Activated CD4-positive, alpha-beta T cell treated with anti-CD3 and anti-CD28 coated beads, Interleukin-2, amount 10 ng/mL, durations not matched to agents 7 days and 5 days (primary cell): ENCODE measurements at regions of chr14 and their contacts with region 1.

Region 1: DNA sequence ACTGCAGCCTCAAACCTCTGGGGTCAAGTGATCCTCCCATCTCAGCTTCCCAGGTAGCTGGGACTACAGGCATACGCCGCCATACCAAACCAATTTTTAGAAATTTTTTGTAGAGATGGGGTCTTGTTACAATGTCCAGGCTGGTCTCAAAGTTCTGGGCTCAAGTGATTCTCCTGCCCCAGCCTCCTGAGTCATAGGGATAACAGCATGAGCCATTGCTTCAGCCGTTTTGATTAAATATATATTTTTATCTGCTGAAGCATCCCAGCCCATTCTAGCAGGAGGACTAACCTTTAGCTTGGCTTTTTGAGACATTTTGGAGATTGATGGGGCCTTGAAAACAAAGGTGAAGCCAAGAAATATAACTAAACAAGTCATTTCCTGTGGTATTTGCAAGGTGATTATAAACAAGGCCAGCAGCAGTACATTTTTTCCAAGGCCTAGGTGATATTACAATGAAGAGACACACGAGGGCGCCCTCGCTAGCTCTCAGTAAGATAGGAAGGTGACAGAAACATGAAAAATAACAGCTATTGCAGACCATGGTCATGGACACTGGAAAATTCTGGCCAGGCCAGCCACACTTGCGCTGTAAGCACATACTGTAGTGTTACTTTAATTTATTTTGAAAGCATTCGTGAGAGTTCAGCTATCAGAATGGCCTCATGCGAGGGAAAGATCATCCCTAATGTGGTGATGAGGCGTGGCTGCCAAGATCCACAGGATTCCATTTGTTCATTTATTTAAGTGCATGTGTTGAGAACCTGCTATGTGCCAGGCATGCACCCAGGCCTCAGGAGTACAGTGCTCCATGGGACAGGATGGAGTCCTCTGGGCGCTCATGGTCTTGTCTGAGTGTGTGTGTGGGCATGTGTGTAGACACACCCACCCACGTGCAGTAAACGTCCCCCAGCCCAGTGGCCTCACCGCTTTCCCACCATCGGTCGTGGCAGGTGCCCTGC is 63.5 kb downstream of the DGLUCY start:
- DNase-seq: peak; percentile 74
- H3K4me3 Mint-ChIP-seq: no peak overlapping the region
- H3K27ac Mint-ChIP-seq: peak overlapping the region; percentile 84
- H3K4me1 Mint-ChIP-seq: peaks cover 24% of the 10 kb centered on the region
- H3K27me3 Mint-ChIP-seq: no peaks in the 10 kb centered on the region

Region 2: GRCh38 chr14:91088585-91089235 is 88.6 kb before region 1 on chr14:
- CTCF ChIA-PET with region 1: no interaction called
- POLR2A ChIA-PET with region 1: no interaction called
- DNase-seq: no peak
- H3K4me3 Mint-ChIP-seq: no peak overlapping the region
- H3K27ac Mint-ChIP-seq: peak overlapping the region; percentile 41
- H3K4me1 Mint-ChIP-seq: peaks cover 27% of the 10 kb centered on the region
- H3K27me3 Mint-ChIP-seq: no peaks in the 10 kb centered on the region

Region 3: DNA sequence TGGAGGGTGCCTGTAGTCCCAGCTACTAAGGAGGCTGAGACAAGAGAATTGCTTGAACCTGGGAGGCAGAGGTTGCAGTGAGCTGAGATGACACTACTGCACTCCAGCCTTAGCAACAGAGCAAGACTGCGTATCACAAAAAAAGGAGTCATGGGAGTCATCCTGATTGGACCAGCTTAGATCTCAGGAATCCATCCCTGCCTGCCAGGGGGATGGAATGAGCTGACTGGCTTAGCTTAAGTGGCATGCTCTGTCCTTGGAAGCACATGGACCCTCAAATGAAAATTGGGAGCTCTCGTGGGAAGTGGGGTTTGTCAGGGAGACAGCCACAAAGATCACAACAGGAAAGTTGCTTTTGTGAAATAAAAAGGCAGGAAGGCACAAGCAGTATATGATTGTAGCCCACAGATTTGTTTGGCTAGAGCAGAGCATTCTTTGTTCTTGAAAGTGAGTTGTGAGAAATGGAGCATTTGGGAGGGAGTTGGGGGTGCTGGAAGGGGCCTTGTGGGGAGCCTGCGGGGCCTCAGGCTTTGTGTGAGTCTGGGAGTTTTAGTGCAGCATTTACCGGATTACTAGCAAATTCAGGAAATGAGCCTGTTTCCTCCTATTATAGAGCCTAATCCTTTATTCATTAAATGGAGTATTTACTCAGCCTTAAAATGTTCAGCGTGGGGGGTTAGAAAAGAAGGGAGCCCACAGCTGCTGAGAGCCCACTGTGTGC is 32.8 kb before region 1 on chr14:
- CTCF ChIA-PET with region 1: interaction called, 11 read pairs
- POLR2A ChIA-PET with region 1: no interaction called
- DNase-seq: no peak
- H3K4me3 Mint-ChIP-seq: no peak overlapping the region
- H3K27ac Mint-ChIP-seq: peak overlapping the region; percentile 66
- H3K4me1 Mint-ChIP-seq: peaks cover 64% of the 10 kb centered on the region
- H3K27me3 Mint-ChIP-seq: no peaks in the 10 kb centered on the region

Region 4: DNA sequence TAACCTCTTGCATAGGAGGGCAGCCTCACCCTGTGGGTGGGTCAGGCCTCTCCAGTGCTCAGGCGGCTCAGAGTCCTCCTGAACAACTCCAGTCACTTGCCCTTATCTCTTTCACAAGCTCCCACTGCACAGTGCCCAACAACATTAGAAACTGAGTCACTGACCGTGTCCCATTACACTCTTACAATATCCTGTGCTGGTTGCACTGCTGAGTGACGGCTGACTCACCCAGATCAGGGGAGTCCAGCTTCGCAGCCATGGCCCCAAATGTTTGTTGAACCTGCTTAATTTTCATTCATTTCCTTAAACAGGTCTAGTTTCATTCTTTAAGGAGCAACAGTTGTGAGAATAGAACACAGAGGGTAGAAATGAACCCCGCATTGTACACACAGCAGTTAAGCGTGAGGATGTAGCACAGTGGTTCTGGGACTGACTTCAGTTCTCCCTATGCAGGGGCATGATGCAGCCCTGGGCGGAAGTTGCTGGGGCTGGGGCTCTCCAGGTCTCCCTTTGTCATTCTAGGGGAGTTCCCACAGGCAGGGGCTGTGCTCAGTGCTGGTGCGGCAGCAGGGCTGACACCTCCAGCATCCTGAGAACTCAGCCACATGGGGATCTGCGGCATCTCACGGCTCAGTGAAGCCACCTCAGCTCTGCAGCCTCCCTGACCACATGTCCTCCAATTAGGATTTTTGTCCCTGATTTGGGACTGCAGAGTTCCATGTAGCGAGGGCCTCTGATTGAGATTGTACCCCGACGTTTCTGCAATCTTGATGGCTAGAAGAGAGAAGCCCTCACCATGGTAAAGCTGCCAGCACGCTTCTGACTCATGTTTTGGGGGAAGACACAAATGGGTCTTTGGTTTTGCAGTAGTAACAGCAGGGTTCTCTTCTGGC is 51.0 kb after region 1 on chr14:
- CTCF ChIA-PET with region 1: interaction called, 17 read pairs
- POLR2A ChIA-PET with region 1: no interaction called
- DNase-seq: peak; percentile 84
- H3K4me3 Mint-ChIP-seq: peak overlapping the region; percentile 64
- H3K27ac Mint-ChIP-seq: peak overlapping the region; percentile 99
- H3K4me1 Mint-ChIP-seq: peaks cover 90% of the 10 kb centered on the region
- H3K27me3 Mint-ChIP-seq: no peaks in the 10 kb centered on the region

Region 5: DNA sequence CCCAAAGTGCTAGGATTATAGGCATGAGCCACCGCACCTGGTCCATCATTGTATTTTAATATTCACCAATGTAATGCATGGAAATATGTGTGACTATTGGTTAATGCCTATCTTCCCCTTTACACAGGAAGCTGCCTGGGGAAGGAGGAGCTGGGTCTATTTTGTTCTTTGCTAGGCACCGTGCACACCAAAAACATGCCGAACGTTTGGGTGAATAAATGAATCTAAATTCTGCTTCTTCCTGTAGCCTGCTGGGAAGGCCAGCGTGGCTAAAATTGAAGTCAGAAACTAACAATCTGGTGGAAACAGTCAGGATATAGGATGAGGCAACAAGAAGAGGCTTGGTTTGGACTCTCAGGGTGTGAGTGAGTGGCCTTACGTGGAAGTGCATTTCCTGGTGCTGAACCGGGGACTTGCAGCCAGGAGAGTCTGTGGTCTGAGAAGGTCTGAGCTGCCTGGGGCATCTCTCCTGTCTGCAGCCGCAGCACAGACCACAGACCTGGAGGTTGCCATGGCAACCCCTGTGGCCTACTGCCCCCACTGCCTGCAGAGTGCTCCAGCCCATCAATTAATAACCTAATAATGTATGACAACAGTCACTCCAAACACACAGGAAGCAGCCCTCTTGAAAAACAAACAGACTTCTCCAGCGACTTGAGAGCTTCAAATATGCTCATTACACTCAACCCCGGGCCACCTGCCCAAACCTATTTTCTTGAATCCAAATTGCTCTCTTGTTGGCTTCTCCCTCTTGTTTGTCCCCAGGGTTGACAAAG is 72.7 kb after region 1 on chr14:
- CTCF ChIA-PET with region 1: interaction called, 20 read pairs
- POLR2A ChIA-PET with region 1: no interaction called
- DNase-seq: peak; percentile 63
- H3K4me3 Mint-ChIP-seq: peak overlapping the region; percentile 39
- H3K27ac Mint-ChIP-seq: peak overlapping the region; percentile 96
- H3K4me1 Mint-ChIP-seq: peaks cover 86% of the 10 kb centered on the region
- H3K27me3 Mint-ChIP-seq: no peaks in the 10 kb centered on the region

Region 6: DNA sequence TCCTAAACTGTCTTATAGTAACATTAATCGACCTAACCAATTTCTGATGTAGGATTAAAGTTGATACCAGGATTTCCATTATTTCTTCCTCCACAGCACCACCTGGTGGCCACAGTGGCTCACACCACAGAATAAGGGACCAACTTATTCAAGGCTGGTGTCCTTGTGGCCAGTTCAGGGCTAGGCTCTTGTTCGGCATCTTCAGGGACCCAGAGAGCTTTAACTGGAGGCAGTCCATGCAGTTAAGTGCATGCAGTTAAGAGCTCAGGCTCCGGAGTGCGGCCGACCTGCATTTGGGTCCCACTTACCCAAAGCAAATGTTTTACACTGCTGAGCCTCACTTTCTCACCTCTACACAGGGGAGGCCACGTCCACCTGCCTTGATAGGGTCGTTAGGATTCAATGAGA is 109.2 kb after region 1 on chr14:
- CTCF ChIA-PET with region 1: interaction called, 101 read pairs
- POLR2A ChIA-PET with region 1: no interaction called
- DNase-seq: peak; percentile 85
- H3K4me3 Mint-ChIP-seq: no peak overlapping the region
- H3K27ac Mint-ChIP-seq: peak overlapping the region; percentile 2
- H3K4me1 Mint-ChIP-seq: peaks cover 34% of the 10 kb centered on the region
- H3K27me3 Mint-ChIP-seq: no peaks in the 10 kb centered on the region